ENCODE measurements at regions of chr19 and their contacts with region 1.

Region 1: DNA sequence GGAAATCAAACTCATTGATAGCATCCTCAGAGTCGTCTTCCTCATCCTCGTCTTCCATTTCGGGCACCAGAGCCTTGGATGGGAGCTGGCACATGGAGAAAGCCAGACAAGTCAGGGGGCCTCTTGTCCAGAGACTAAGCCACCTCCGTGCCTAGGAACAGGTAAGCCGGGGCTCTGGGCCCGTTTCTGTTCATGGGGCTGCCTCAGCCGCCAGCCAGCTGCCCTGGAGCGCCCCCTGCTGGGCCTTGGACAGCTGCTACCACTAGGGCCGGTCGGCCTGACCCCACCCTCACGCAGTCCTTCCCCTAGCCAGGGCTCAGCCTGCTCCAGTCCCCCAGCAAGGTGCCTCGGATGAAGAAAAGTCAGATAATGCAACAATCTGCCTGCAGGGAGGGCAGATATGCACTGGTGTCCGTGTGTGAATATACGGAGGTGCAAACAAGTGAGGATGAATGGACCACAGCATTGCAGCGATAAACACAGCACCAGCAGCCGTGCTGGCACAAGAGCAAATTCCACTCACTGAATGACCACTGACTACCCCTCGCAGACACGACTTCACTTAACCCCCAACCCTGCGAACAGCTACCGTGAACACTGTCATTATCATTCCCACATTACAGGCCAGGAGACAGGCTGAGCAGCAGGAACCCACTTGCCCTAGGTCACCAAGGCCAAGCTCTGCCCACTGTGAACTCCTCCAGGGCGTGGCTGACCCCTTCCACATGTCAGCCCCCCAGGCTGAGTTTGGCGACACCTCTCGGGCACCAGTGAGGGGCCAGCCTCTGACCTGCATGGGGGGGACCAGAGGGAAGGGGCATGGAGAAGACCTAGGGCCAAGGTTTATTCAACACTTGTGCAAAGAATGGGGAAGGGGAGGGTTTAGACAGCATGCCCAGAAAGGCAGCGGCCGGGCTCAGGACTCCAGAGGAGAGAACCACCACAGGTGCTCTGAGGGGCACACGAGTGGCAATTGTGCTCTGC is 12.1 kb upstream of the PRKD2 start:
- DNase-seq: peak; percentile 87
- ATAC-seq: peak; percentile 89
- H3K4me3 ChIP-seq: no peak overlapping the region
- H3K4me3 Mint-ChIP-seq: no peak overlapping the region
- H3K27ac ChIP-seq: no peak overlapping the region
- H3K27ac Mint-ChIP-seq: peak overlapping the region; percentile 80
- H3K4me1 ChIP-seq: peaks cover 10% of the 10 kb centered on the region in 2 donors
- H3K4me1 Mint-ChIP-seq: peaks cover 30% of the 10 kb centered on the region
- H3K27me3 ChIP-seq: no peaks in the 10 kb centered on the region
- H3K27me3 Mint-ChIP-seq: no peaks in the 10 kb centered on the region
- CTCF ChIP-seq: peak; percentile 92

Region 2: GRCh38 chr19:46529622-46530462 is 199.1 kb before region 1 on chr19:
- CTCF ChIA-PET with region 1: interaction called, 10 read pairs
- POLR2A ChIA-PET with region 1: no interaction called
- intact Hi-C with region 1: no loop called
- DNase-seq: peak; percentile 81
- ATAC-seq: peak; percentile 67
- H3K4me3 ChIP-seq: no peak overlapping the region
- H3K4me3 Mint-ChIP-seq: no peak overlapping the region
- H3K27ac ChIP-seq: no peak overlapping the region
- H3K27ac Mint-ChIP-seq: no peak overlapping the region
- H3K4me1 ChIP-seq: peaks cover 0 to 10% of the 10 kb centered on the region in 2 donors
- H3K4me1 Mint-ChIP-seq: peaks cover 10% of the 10 kb centered on the region
- H3K27me3 ChIP-seq: peaks cover 0 to 15% (median 3%) of the 10 kb centered on the region in 4 experiments
- H3K27me3 Mint-ChIP-seq: peaks cover 8% of the 10 kb centered on the region
- CTCF ChIP-seq: peak; percentile 98

Region 3: GRCh38 chr19:46692918-46693722 is 35.9 kb before region 1 on chr19:
- CTCF ChIA-PET with region 1: interaction called, 353 read pairs
- POLR2A ChIA-PET with region 1: no interaction called
- intact Hi-C with region 1: loop called (anchors 5 kb)
- DNase-seq: no peak
- ATAC-seq: no peak
- H3K4me3 ChIP-seq: no peak overlapping the region
- H3K4me3 Mint-ChIP-seq: no peak overlapping the region
- H3K27ac ChIP-seq: peak overlapping the region in 1 of 2 donors; percentile 34
- H3K27ac Mint-ChIP-seq: no peak overlapping the region
- H3K4me1 ChIP-seq: no peaks in the 10 kb centered on the region
- H3K4me1 Mint-ChIP-seq: peaks cover 3% of the 10 kb centered on the region
- H3K27me3 ChIP-seq: no peaks in the 10 kb centered on the region
- H3K27me3 Mint-ChIP-seq: no peaks in the 10 kb centered on the region
- CTCF ChIP-seq: no peak

Region 4: GRCh38 chr19:46704379-46705076 is 24.5 kb before region 1 on chr19:
- CTCF ChIA-PET with region 1: interaction called, 353 read pairs
- POLR2A ChIA-PET with region 1: interaction called, 18 read pairs
- intact Hi-C with region 1: loop called (anchors 1 kb)
- DNase-seq: peak; percentile 85
- ATAC-seq: peak; percentile 93
- H3K4me3 ChIP-seq: no peak overlapping the region
- H3K4me3 Mint-ChIP-seq: no peak overlapping the region
- H3K27ac ChIP-seq: peak overlapping the region in 1 of 2 donors; percentile 48
- H3K27ac Mint-ChIP-seq: peak overlapping the region; percentile 87
- H3K4me1 ChIP-seq: peaks cover 3 to 8% of the 10 kb centered on the region in 2 donors
- H3K4me1 Mint-ChIP-seq: peaks cover 13% of the 10 kb centered on the region
- H3K27me3 ChIP-seq: no peaks in the 10 kb centered on the region
- H3K27me3 Mint-ChIP-seq: no peaks in the 10 kb centered on the region
- CTCF ChIP-seq: peak; percentile 93

Region 5: GRCh38 chr19:46710687-46711086 is 18.3 kb before region 1 on chr19:
- CTCF ChIA-PET with region 1: interaction called, 353 read pairs
- POLR2A ChIA-PET with region 1: interaction called, 18 read pairs
- intact Hi-C with region 1: loop called (anchors 1 kb)
- DNase-seq: no peak
- ATAC-seq: no peak
- H3K4me3 ChIP-seq: no peak overlapping the region
- H3K4me3 Mint-ChIP-seq: no peak overlapping the region
- H3K27ac ChIP-seq: peak overlapping the region in 1 of 2 donors; percentile 26
- H3K27ac Mint-ChIP-seq: no peak overlapping the region
- H3K4me1 ChIP-seq: peaks cover 12 to 24% of the 10 kb centered on the region in 2 donors
- H3K4me1 Mint-ChIP-seq: peaks cover 26% of the 10 kb centered on the region
- H3K27me3 ChIP-seq: no peaks in the 10 kb centered on the region
- H3K27me3 Mint-ChIP-seq: no peaks in the 10 kb centered on the region
- CTCF ChIP-seq: no peak

Region 6: DNA sequence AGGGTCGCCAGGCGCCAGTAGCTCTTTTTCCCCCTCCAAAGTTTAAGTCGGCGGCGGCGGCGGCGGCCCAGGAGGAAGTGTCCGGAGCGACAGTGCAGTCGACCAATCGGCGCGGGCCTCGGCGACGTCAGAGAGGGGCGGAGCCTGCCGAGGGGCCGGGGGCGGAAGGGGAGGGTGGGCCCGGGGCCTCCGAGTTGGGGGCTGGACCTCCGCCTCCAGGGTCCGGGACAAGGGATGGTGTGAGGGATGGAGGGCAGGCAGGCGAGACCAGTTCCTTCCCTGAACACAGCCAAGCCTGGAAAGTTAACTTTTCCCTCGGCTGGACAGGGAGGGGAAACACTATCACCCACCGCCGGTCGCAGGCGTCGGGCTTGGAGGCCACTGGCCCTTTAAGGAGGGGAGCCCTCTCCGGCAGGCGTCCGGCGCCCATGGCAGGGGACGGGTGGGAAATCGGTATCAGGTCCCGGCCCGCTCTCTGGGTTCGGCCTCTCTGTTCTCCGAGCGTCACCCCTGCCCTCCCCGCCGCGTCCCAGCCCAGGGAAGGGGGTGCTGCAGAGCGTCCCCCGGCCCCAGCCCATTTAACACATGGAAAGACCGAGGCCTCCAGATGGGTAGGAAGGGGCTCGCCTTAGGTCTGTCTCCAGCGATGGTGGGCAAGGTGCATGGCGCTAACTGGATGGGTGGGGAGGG is 11.8 kb before region 1 on chr19 and contains the start of gene PRKD2:
- CTCF ChIA-PET with region 1: interaction called, 55 read pairs
- POLR2A ChIA-PET with region 1: interaction called, 12 read pairs
- intact Hi-C with region 1: loop called (anchors 1 kb)
- DNase-seq: peak; percentile 89
- ATAC-seq: peak; percentile 48
- H3K4me3 ChIP-seq: peak within 1 kb of the TSS; percentile 77 to 99 (median 92)
- H3K4me3 Mint-ChIP-seq: peak within 1 kb of the TSS; percentile 97
- H3K27ac ChIP-seq: peak within 1 kb of the TSS; percentile 89 to 92
- H3K27ac Mint-ChIP-seq: peak within 1 kb of the TSS; percentile 95
- H3K4me1 ChIP-seq: peaks cover 58 to 75% of the 10 kb centered on the region in 2 donors
- H3K4me1 Mint-ChIP-seq: peaks cover 66% of the 10 kb centered on the region
- H3K27me3 ChIP-seq: no peaks in the 10 kb centered on the region
- H3K27me3 Mint-ChIP-seq: no peaks in the 10 kb centered on the region
- CTCF ChIP-seq: no peak
- total RNA-seq, gene PRKD2: 185 and 192 TPM in 2 replicates

Region 7: DNA sequence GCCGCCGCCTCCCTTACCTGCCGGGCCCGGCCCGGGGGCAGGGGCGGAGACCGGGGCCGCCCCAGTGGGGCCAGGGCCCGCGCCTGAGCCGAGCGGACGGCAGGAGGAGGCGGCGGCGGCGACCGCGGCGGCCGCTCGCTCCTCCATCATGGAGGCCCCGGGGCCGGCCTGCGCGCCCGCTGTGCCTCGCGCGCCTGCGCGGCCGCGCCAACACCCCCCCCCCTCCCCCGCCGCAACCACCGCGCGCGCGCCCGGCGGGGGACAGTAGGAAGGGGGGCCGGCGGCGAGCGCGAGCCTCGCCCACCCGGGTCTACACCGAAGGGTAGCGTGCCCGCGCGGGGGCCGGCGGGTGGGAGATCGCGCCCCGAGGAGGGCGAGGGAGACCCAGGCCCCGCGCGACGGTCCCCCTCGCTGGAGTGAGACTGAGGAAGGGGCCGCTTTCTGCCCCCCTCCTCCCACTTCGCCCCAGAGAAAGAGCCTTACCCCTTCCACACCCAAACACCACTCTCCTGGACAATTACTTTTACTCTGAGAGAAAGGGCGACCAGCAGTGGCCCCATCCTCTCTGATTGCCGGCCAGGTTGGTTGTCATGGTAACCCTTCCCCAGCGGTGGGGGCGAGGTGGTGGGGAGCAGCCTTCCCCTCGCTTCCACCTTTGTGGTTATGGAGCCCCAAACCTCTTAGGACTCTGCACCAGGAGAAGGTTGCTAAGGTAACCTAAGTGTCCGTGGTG is 17.5 kb after region 1 on chr19 and contains the start of gene STRN4:
- CTCF ChIA-PET with region 1: interaction called, 9 read pairs
- POLR2A ChIA-PET with region 1: interaction called, 5 read pairs
- intact Hi-C with region 1: loop called (anchors 1 kb)
- DNase-seq: peak; percentile 82
- ATAC-seq: peak; percentile 78
- H3K4me3 ChIP-seq: peak within 1 kb of the TSS; percentile 51 to 87 (median 84)
- H3K4me3 Mint-ChIP-seq: peak within 1 kb of the TSS; percentile 93
- H3K27ac ChIP-seq: peak within 1 kb of the TSS; percentile 43 to 77
- H3K27ac Mint-ChIP-seq: peak within 1 kb of the TSS; percentile 85
- H3K4me1 ChIP-seq: peaks cover 15 to 43% of the 10 kb centered on the region in 2 donors
- H3K4me1 Mint-ChIP-seq: peaks cover 58% of the 10 kb centered on the region
- H3K27me3 ChIP-seq: no peaks in the 10 kb centered on the region
- H3K27me3 Mint-ChIP-seq: no peaks in the 10 kb centered on the region
- CTCF ChIP-seq: no peak
- total RNA-seq, gene STRN4: 102 and 112 TPM in 2 replicates